AG04450 (cell line): ENCODE measurements at regions of chr11 and their contacts with region 1.

Region 1: GRCh38 chr11:22901603-22902002 is 41.3 kb upstream of the CCDC179 start:
- DNase-seq: no peak
- H3K4me3 ChIP-seq: no peak overlapping the region
- H3K27ac ChIP-seq: no peak overlapping the region
- H3K27me3 ChIP-seq: no peaks in the 10 kb centered on the region
- CTCF ChIP-seq: no peak

Region 2: DNA sequence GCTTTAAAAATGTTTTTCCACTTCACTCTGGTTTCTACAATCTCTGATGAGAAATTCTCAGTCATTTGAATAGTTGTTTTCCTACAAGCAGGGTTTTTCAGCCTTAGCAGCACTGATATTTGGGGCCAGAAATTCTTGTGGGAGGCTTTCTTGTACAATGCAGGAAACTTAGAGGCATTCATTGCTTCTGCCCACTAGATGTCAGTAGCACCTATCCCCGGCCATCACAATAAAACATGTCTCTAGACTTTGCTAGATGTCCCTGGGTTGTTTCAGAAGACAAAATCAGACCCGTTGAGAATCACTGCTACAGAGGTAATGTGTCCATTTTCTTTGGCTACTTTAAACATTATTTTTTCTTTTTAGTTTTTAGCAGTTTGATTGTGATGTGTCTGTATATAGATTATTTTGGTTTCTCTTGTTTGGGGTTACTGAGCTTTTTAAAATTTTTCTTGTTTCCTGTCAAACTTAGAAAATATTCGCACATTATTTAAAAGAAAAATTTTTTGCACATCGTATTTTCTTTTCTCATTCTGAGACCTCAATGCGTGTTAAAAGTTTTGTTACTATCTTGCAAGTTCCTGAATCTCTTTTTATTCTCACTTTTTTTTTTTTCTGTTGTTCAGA is 19.4 kb after region 1 on chr11:
- CTCF ChIA-PET with region 1: interaction called, 10 read pairs
- POLR2A ChIA-PET with region 1: no interaction called
- DNase-seq: peak; percentile 46
- H3K4me3 ChIP-seq: no peak overlapping the region
- H3K27ac ChIP-seq: no peak overlapping the region
- H3K27me3 ChIP-seq: no peaks in the 10 kb centered on the region
- CTCF ChIP-seq: peak; percentile 95